GM10248 (cell line): ENCODE measurements at regions of chr11 and their contacts with region 1.

Region 1: DNA sequence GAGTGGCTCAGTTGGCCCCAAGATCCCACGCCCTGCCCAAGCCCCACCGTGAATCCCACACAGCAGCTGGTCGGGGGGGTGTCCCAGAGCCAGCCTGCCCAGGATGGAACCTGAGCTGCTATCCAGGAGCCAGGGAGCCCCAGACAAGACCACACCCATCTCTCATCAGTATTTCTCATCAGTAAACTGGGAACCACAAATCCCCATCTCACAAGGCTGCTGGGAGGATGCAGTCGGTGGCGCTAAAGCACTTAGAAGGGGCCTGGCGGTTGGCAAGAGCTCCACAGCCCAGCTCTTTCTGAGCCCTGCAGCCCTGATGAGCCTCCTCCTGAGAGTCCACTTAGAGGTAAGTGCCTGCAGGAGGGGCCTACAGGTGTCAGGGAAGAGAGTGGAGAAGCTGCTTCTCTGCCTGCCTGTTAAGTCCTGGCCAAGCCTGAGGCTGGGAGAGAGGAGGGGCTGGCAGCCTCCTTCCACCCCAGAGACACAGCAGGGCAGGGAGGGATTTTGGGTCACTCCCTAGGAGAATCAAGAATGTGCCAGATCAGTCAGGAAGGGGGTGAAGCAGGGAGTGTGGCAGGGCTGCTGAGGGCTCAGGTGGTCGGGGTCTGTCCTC is 6.1 kb downstream of the FADS3 start:
- DNase-seq: no peak
- CTCF ChIP-seq: no peak

Region 2: DNA sequence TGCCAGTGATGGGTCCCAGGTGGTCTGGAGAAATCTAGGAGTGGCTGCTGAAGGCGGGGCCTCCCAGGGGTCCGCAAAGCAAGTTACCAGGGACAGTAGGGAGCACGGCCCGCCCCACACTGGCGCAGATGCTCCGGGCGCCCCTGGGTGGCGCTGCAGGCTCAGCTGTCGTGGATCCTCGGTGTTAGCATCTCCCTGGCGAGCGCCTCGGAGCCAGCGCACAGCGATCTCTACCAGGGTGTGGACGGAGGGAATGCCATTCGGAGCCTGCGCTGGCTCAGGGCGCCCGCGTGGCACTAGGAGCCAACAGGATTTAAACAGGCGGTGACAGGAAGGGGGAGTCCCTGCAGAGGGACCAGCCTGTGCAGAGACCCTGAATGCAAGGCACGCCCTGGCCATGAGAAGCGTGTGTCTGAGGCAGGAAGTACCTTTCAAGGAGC is 14.1 kb before region 1 on chr11:
- CTCF ChIA-PET with region 1: interaction called, 48 read pairs
- POLR2A ChIA-PET with region 1: no interaction called
- DNase-seq: peak; percentile 87
- CTCF ChIP-seq: peak; percentile 93